Activated T-helper 1 cell treated with anti-CD3 and anti-CD28 coated beads, Interleukin-12 subunit alpha, Interleukin-12 subunit beta, Interleukin-2, Interleukin-4 antibody, amounts not matched to agents 30 ng/mL and 10 ng/mL and 1 ng/mL, durations not matched to agents 14 hours and 24 hours and 36 hours (primary cell): ENCODE measurements at regions of chr20 and their contacts with region 1.

Region 1: DNA sequence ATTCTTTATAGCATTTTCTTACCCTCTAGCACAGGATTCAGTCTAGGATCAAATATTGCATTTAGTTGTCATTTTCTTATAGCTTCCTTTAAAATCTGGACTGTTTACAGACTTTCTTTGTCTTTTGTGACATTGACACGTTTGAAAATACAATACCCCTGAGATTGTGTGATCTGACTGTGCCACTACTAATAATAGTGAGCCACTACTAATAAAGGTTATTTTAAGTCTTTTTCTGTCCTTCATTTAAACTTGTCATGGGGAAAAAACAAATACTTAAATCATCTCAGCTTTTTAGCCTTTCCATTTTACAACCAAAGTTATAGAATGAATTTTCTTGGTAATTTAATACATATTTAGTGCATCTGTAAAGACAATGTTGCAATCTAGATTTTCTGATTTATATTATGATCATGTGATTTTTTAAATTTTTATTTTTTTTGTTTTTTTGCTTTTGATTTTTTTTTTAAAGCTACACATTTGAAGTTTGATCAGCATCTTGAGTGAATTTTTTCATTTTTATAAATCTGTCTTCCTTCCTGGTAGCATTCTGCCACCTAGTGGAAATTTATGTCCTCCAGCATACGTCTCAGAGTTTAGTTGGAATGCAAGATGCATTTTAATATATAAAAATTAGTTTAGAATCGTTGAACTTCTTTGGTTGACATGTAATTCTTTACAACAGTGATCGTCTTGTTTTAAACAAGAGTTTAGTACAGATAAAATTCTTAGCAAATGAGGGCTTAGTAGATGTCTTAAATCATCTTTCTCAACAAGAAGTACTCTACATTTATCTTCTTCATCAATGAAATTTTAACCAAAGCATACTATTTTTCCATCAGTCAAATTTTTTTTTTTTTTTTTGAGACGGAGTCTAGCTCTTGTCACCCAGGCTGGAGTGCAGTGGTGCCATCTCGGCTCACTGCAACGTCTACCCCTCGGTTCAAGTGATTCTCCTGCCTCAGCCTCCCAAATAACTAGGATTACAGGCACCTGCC is 119.4 kb downstream of the NCOA3 start:
- DNase-seq: no peak
- H3K4me3 Mint-ChIP-seq: no peak overlapping the region
- H3K27ac Mint-ChIP-seq: peak overlapping the region; percentile 19
- H3K4me1 Mint-ChIP-seq: peaks cover 51% of the 10 kb centered on the region
- H3K27me3 Mint-ChIP-seq: no peaks in the 10 kb centered on the region

Region 2: DNA sequence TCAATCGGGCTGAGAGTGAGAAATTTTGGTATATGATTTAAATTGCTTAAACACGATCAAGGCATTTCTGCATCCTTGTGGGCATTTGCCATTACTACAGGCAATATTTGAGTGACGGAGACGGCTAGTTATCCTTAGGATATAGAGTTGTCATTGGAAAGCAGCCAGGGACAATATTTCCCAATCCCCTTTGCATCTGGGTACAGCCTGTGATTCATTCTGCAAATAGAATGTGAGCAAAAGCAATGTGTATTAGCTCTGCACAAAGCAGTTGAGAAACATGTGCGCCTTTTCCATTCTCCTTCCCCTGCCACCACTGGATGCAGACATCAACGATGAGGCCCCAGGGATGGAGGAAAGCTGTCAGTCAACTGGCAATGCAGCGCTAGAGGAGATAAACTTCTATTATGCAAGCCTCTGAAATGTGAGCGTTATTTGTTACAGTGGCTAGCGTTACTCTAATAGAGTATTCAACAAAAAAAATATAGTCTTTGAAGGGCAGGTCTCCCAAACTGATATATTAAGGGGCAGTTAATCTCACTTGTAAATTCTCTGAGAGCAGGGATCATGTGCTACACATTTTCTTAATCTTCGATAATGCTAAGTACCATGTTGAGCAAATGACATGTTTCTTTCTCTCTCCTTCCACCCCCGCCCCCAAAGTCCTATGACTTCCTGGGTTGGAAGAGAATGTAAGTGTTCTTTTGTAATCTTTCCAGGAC is 156.6 kb before region 1 on chr20:
- intact Hi-C with region 1: no loop called
- DNase-seq: no peak
- H3K4me3 Mint-ChIP-seq: no peak overlapping the region
- H3K27ac Mint-ChIP-seq: no peak overlapping the region
- H3K4me1 Mint-ChIP-seq: no peaks in the 10 kb centered on the region
- H3K27me3 Mint-ChIP-seq: peaks cover 2% of the 10 kb centered on the region

Region 3: DNA sequence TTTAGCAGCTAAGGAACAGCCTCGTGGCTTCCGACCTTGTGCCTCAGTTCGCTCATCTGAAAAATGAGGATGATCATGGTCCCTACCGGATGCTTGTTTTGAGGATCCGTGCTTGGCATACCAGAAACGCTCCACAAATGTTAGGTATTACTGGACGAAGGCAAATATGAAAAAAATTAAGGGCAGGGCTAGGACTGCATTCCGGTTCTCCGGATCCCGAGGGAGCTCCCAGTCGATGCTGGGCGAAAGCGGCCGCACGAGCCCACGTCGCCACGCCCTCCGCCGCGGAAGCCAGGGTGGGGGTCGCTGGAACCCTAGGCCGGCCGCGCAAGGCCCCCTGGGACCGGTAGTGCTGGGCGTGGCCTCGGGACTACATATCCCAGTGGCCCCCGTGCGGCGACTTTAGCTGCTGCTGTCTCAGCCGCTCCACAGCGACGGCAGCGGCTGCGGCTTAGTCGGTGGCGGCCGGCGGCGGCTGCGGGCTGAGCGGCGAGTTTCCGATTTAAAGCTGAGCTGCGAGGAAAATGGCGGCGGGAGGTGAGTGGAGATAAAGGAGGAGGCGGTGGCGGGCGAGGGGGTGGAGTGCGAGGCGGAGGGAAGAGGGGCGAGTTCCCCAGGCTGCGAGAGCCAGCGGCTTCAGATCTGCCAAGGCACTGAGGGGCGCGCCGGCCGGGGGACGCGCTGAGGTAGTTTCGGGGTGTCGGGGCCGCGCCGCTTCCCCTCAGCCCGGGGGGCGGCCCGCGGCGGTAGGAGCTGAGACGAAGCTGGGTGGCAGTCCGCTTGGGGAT is 119.4 kb before region 1 on chr20 and contains the start of gene NCOA3:
- intact Hi-C with region 1: loop called (anchors 1 kb)
- DNase-seq: peak; percentile 89
- H3K4me3 Mint-ChIP-seq: peak within 1 kb of the TSS; percentile 92
- H3K27ac Mint-ChIP-seq: peak within 1 kb of the TSS; percentile 99
- H3K4me1 Mint-ChIP-seq: peaks cover 61% of the 10 kb centered on the region
- H3K27me3 Mint-ChIP-seq: no peaks in the 10 kb centered on the region
- total RNA-seq, gene NCOA3: 132 and 133 TPM in 2 replicates

Region 4: GRCh38 chr20:47586646-47587306 is 34.3 kb before region 1 on chr20:
- intact Hi-C with region 1: loop called (anchors 5 kb)
- DNase-seq: no peak
- H3K4me3 Mint-ChIP-seq: no peak overlapping the region
- H3K27ac Mint-ChIP-seq: no peak overlapping the region
- H3K4me1 Mint-ChIP-seq: peaks cover 32% of the 10 kb centered on the region
- H3K27me3 Mint-ChIP-seq: no peaks in the 10 kb centered on the region